Uterus (tissue), 4 donors: ENCODE measurements at regions of chr16 and their contacts with region 1.

Region 1: DNA sequence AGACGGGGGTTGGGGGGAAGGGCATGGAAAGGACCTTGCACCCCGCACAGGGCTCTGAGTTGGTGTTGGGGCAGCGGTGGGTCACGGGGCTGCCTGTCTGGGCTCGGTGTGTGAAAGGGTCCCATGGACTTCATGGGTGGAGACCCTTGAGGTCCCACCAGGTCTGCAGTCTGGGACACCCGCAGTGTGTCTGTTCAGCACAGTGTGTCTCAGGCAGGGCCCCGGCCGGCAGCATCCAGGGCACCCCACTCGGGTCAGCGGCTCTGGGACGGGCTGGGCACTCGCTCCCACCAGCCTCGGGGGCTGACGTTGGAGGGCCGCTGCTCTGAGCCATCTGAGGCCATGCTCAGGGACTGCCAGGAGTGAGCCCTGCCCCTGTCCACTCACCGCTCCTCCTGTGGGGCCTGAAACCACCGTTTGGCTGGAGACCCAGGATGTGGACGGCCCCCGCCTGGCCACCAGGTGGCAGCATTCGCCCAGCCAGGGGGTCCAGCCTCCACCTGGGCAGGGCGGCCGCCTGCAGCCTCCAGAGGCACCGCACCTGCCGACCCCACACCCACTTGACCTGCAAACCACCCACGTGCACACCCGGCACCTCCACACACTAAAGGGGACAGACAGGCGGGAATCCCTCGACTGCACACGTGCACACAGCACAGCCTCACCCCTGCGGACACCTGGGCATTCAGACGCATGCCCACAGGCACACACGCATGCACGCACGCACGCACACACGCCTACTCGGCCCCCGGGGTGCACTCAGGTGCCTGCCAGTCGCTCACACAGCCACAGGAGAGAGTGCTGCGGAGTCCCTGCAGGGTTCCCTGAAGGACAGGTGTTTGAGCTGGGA is 10.1 kb upstream of the ZFPM1 start:
- DNase-seq: peak; percentile 65 to 79
- H3K4me3 ChIP-seq: no peak overlapping the region
- H3K27ac ChIP-seq: no peak overlapping the region
- H3K4me1 ChIP-seq: peaks cover 0 to 3% of the 10 kb centered on the region in 2 donors
- H3K27me3 ChIP-seq: no peaks in the 10 kb centered on the region
- CTCF ChIP-seq: peak; percentile 94 to 98 (median 97)
- POLR2A ChIP-seq: peak in 1 of 2 donors; percentile 31

Region 2: DNA sequence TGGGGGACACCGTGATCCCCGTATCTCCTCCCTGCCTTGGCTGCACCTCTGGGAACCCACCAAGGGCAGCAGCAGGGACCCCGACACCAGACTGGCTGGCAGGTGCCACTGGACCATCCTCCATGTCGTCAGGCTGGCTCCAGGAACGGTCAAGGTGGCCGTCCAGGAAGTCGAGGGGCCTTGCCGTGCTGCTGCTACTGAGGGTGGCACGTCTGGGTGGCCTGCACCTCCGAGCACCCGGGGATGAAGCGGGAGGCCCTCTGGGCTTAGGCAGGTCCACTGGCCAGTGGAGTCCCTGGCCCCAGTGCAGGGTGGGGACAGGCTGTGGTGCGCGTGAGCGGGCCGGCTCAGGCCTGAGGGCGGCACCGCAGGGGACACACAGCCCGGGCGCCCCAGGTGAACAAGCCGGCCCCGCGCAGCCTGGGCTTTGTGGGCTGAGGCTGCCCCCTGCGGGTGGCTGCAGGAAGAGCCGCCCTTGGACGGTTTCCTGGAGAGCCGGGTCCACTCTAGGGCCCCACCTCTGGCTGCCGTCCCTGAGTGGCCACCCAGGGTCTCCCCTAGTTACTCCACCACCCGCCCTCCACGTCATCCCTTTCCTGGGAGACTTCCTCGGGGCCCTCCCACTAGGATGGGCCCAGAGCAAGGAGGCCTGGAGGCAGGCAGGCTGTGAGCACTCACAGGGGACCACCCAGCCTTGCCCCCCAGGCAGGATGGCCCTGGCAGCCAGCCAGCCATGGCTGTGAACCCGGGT is 84.4 kb after region 1 on chr16:
- intact Hi-C with region 1: loop called (anchors 10 kb)
- DNase-seq: peak; percentile 64 to 77
- H3K4me3 ChIP-seq: no peak overlapping the region
- H3K27ac ChIP-seq: no peak overlapping the region
- H3K4me1 ChIP-seq: peaks cover under 1 to 4% of the 10 kb centered on the region in 2 donors
- H3K27me3 ChIP-seq: no peaks in the 10 kb centered on the region
- CTCF ChIP-seq: peak; percentile 80 to 93 (median 88)
- POLR2A ChIP-seq: peak in 1 of 2 donors; percentile 15

Region 3: DNA sequence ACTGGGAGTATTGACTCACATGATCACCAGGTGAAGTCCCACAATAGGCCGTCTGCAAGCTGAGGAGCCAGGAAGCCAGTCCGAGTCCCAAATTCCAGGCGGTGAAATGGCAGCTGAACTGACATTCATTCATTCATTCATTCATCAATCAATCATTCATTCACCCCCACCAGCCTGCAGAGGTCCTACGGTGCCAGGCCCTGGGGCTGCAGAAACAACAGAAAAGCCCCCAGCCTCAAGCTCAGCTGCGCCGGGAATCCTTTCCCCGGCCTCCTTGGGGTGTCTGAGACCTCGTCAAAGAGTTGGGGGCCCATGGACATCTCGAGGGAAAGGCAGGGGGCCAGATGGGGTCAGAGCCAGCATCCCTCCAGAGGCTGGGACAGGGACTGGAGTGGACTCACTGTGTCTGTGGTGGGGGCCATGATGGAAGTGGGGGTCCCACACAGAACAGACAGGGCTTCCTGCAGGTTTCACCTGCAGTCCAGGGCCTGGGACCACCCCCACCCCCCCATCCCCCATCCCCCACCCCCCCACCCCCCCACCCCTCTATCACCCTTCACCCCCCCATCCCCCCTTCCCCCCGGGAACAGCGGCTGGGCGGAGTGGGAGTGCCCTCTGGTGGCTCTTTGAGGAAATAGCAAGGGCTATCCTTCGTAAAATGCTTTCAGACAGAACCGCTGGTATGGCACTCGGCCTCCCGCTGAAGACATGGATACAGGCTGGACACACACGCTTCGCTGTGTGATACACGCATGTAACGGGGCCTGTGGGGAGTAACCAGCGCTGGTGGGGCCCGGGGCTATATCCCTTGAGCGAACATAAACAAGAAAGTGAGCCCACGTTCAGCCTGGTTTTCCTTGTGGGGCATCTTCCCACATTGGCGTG is 118.8 kb after region 1 on chr16:
- intact Hi-C with region 1: loop called (anchors 5 kb)
- DNase-seq: peak; percentile 41 to 45
- H3K4me3 ChIP-seq: no peak overlapping the region
- H3K27ac ChIP-seq: no peak overlapping the region
- H3K4me1 ChIP-seq: no peaks in the 10 kb centered on the region
- H3K27me3 ChIP-seq: no peaks in the 10 kb centered on the region
- CTCF ChIP-seq: peak; percentile 63 to 70 (median 66)
- POLR2A ChIP-seq: no peak